SK-N-SH (cell line): ENCODE measurements at regions of chr19 and their contacts with region 1.

Region 1: DNA sequence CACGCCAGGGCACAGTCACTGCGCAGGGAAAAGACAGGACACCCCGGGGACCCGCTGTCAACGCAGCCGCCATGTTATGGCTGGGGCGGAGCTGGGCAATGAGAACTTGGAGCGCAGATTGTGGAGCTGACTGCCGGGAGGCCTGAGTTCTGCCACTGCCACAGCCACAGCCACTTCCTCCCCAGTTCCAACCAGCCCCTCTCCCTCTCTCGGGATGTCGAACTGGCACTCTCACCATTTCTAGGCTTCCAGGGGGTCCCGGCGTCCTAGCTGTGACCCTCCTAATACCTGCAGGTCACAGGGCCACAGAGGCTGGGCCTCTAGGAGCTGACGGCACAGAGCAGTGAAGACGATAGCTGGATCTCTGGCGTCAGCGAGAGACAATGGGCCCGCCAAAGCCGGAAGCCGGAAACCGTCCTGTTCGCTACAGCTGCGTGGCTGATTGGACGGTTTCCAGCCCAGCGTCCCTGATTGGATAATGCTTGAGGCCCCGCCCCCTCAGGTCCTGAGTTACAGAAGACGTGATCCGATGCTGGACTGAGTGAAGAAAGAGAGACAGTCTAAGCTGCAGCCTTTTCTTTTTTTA is at the start of gene ZNF506:
- DNase-seq: peak; percentile 90
- H3K4me3 ChIP-seq: peak within 1 kb of the TSS; percentile 58 to 82
- H3K27ac ChIP-seq: peak within 1 kb of the TSS; percentile 89 to 92
- H3K4me1 ChIP-seq: no peaks in the 10 kb centered on the region; a peak in 1 of 4 replicates
- H3K27me3 ChIP-seq: no peaks in the 10 kb centered on the region
- CTCF ChIP-seq: no peak
- EP300 ChIP-seq: no peak
- RAD21 ChIP-seq: no peak
- polyA plus RNA-seq, gene ZNF506: 4.1 and 7.3 TPM in 2 replicates

Region 2: DNA sequence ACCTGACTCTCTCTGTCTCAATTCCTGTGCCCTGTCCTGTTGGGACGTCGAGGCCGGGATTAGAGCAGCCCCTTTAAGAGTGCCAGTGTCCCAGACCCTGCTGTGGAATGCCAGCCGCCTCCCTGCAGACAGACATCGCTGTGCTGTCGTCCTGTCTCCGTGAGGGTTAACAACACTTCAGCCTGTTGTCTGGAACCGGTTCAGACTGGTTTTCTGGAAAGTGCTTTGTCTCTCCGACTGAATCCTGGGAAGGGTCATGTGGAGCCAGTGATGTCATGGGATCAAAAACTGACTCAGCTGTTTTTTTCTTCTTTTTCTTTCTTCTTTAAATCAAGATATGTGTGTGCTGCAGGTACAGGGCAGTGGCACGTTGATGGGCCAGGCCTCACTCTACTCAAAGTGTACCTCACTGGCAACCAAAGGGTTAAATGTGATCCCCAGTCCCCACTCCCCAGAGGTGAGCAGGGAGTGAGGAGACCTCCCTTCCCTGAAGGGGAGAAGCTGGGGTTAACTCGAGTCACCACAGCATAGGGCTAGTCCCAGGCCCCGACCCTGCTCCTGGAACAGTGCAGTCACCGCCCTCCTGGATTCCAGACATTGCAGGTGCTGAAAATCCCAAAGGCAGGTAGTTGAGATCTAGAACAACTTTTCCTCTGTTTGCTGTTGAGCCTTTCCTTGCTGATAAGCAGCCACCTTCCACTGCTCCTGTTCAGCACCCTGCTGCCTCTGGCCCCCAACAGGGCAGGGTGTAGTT is 356.9 kb before region 1 on chr19:
- CTCF ChIA-PET with region 1: no interaction called
- POLR2A ChIA-PET with region 1: no interaction called
- DNase-seq: no peak
- H3K4me3 ChIP-seq: no peak overlapping the region
- H3K27ac ChIP-seq: peak overlapping the region in 1 of 2 experiments; percentile 8; a peak in 2 of 4 replicates
- H3K4me1 ChIP-seq: peaks cover 43 to 51% of the 10 kb centered on the region in 2 experiments
- H3K27me3 ChIP-seq: no peaks in the 10 kb centered on the region
- CTCF ChIP-seq: no peak
- EP300 ChIP-seq: no peak
- RAD21 ChIP-seq: no peak

Region 3: DNA sequence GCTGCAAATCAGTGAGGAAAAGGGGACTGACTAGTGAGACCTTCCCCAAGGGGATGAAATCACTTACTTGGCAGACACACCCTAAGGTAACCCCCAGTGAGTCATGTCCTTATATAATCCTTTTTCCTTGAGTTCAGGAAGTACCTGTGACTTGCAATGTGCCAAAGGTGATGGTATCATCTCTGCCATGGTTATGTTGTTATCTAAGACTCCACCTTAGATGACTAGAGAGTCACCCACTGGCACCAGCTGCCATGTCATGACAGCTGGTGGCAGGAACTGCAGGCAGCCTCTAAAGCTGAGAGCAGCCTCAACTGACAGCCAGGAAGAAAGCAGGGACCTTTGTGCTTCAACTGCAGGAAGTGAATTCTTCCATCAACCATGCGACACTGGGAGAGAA is 215.4 kb before region 1 on chr19:
- CTCF ChIA-PET with region 1: no interaction called
- POLR2A ChIA-PET with region 1: no interaction called
- DNase-seq: no peak
- H3K4me3 ChIP-seq: no peak overlapping the region
- H3K27ac ChIP-seq: no peak overlapping the region
- H3K4me1 ChIP-seq: no peaks in the 10 kb centered on the region
- H3K27me3 ChIP-seq: no peaks in the 10 kb centered on the region
- CTCF ChIP-seq: no peak
- EP300 ChIP-seq: no peak
- RAD21 ChIP-seq: no peak

Region 4: DNA sequence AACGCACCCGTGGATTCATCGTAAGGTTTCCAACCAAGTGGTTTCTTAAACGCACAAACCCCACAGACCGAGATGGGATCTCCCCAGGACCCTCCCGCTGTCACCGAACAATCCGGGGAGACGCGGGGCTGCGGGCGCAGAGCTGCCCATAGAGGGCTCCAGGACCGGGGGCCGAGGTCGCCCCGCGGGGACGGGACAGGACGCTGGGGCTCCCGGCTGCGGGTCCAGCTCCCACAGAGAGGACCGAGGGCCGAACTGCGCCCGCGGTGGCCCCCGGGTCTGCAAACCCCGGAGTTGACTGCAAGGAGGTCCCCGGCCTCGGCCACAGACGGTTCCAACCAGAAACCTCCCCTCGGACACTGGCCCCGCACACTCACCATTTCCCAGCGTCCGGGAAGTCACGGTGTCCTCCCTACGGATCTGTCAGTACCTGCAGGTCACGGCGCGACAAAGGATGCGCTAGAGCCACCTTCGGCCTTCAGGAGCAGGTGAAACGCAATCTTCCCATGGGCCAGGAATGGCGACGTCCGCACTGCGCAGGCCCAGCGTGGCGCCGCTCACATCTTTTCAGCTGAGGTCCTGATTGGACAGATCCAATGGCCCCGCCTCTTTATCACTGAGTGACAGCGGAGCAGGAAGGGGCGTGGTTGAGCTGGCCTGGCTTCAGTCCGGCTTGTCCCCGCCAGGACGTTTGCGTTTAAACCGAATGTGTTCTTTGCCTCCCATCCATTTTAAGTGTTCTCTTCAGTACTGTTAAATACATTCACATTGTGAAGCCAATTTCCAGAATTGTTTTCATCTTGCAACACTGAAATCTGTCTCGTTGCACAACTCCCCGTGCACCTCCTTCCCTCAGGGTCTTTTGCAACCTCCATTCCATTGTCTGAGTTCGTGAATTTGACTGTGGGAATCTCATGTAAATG is 88.6 kb before region 1 on chr19 and contains the start of gene ZNF14:
- CTCF ChIA-PET with region 1: no interaction called
- POLR2A ChIA-PET with region 1: interaction called, 10 read pairs
- DNase-seq: peak; percentile 98
- H3K4me3 ChIP-seq: peak within 1 kb of the TSS; percentile 71 to 95
- H3K27ac ChIP-seq: peak within 1 kb of the TSS; percentile 39 to 72; a peak in 3 of 4 replicates
- H3K4me1 ChIP-seq: no peaks in the 10 kb centered on the region
- H3K27me3 ChIP-seq: no peaks in the 10 kb centered on the region
- CTCF ChIP-seq: peak; percentile 23; the same call in 1 of the 2 replicates
- EP300 ChIP-seq: no peak
- RAD21 ChIP-seq: no peak
- polyA plus RNA-seq, gene ZNF14: 1.1 and 1.7 TPM in 2 replicates

Region 5: GRCh38 chr19:19749898-19750617 is 71.4 kb before region 1 on chr19:
- CTCF ChIA-PET with region 1: no interaction called
- POLR2A ChIA-PET with region 1: no interaction called
- DNase-seq: no peak
- H3K4me3 ChIP-seq: no peak overlapping the region
- H3K27ac ChIP-seq: no peak overlapping the region
- H3K4me1 ChIP-seq: no peaks in the 10 kb centered on the region
- H3K27me3 ChIP-seq: no peaks in the 10 kb centered on the region
- CTCF ChIP-seq: no peak
- EP300 ChIP-seq: no peak
- RAD21 ChIP-seq: no peak

Region 6: GRCh38 chr19:19776041-19777008 is 45.1 kb before region 1 on chr19:
- CTCF ChIA-PET with region 1: no interaction called
- POLR2A ChIA-PET with region 1: interaction called, 17 read pairs
- DNase-seq: peak; percentile 90
- H3K4me3 ChIP-seq: peak overlapping the region; percentile 79 to 83
- H3K27ac ChIP-seq: peak overlapping the region; percentile 38 to 82
- H3K4me1 ChIP-seq: peaks cover 0 to 12% of the 10 kb centered on the region in 2 experiments; a peak in 2 of 4 replicates
- H3K27me3 ChIP-seq: no peaks in the 10 kb centered on the region
- CTCF ChIP-seq: no peak
- EP300 ChIP-seq: no peak
- RAD21 ChIP-seq: 0 out of 2 replicates have a peak, but pooled peaks have one; percentile 10

Region 7: DNA sequence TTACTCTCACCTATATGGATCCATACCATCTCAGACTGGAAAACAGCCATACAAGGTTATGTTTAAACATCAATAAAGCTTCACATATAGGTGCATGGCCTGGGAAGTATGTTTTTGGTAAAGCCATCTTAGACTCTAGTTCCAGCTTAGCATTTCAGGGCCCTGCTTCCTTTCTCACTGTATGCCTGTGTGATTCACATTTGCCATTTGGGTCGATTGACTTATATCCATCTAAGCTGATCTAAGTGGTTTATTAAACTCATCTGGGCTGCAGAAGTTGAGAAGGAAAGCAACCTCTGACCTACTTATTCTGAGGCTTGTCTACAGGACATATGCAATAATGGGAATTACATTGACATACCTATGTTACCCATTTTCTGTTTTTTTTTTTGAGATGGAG is 33.4 kb before region 1 on chr19:
- CTCF ChIA-PET with region 1: no interaction called
- POLR2A ChIA-PET with region 1: no interaction called
- DNase-seq: no peak
- H3K4me3 ChIP-seq: no peak overlapping the region
- H3K27ac ChIP-seq: no peak overlapping the region
- H3K4me1 ChIP-seq: no peaks in the 10 kb centered on the region
- H3K27me3 ChIP-seq: no peaks in the 10 kb centered on the region
- CTCF ChIP-seq: no peak
- EP300 ChIP-seq: no peak
- RAD21 ChIP-seq: no peak

Region 8: DNA sequence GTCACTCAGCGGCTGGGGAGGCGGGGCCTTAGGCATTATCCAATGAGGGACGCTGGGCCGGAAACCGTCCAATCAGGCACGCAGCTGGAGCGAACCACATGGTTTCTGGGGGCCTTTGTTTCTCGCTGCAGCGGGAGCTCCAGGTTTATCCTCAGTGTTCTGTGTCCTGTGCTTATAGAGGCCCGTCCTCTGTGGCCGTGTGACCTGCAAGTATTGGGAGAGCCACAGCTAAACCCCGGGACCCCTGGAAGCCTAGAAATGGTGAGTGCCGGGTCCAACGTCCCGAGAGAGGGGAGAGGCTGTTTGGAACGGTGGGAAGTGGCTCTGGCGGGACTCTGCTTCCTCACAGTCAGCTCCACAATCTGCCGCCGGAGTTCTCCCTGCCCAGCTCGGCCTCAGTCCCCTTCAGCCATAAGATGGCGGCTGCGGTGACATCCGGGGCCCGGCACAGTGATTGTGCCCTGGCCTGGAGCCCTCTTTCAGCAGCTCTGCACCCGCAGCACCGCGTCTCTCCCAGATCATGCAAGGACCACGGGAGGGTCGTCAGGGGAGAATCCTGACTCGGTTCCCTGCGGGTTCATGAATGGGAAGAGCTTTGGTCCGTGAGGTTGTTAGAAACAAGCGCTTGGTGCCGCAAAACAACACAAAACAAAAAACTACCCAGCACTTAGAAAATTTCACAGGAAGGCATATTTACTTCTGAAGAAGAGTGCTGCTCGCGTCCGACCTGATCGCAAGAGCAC is 44.5 kb after region 1 on chr19 and contains the start of gene ZNF253:
- CTCF ChIA-PET with region 1: no interaction called
- POLR2A ChIA-PET with region 1: interaction called, 40 read pairs
- DNase-seq: peak; percentile 92
- H3K4me3 ChIP-seq: peak within 1 kb of the TSS; percentile 78 to 97
- H3K27ac ChIP-seq: peak within 1 kb of the TSS; percentile 80 to 97
- H3K4me1 ChIP-seq: no peaks in the 10 kb centered on the region
- H3K27me3 ChIP-seq: no peaks in the 10 kb centered on the region
- CTCF ChIP-seq: no peak
- EP300 ChIP-seq: no peak
- RAD21 ChIP-seq: no peak
- polyA plus RNA-seq, gene ZNF253: 0.79 and 0.81 TPM in 2 replicates

Region 9: DNA sequence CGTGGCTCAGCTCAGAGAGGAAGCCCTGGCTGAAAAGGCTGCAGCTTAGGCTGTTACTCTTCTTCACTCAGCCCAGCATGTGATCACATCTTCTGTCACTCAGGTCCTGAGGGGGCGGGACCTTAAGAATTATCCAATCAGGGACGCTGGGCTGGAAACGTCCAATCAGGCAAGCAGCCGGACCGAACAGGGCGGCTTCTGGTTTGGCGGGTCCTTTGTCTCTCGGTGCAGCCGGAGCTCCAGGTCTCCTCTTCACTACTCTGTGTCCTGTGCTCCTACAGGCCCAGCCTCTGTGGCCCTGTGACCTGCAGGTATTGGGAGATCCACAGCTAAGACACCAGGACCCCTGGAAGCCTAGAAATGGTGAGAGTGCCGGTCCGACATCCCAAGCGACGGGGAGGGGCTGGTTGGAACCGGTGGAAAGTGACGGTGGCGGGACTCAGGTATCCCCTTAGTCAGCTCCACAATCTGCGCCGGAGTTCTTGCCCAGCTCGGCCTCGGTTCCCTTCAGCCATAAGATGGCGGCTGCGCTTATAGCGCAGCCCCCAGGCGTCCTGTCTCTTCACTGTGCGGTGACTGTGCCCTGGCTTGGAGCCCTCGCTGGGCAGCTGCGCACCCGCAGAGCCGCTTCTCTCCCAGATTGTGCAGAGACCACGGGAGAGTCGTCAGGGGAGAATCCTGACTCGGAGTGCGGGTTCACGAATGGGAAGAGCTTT is 79.4 kb after region 1 on chr19 and contains the start of gene ZNF93:
- CTCF ChIA-PET with region 1: no interaction called
- POLR2A ChIA-PET with region 1: interaction called, 22 read pairs
- DNase-seq: peak; percentile 84
- H3K4me3 ChIP-seq: peak within 1 kb of the TSS; percentile 61 to 90
- H3K27ac ChIP-seq: peak within 1 kb of the TSS; percentile 80 to 86
- H3K4me1 ChIP-seq: no peaks in the 10 kb centered on the region; a peak in 1 of 4 replicates
- H3K27me3 ChIP-seq: no peaks in the 10 kb centered on the region
- CTCF ChIP-seq: no peak
- EP300 ChIP-seq: no peak
- RAD21 ChIP-seq: no peak
- polyA plus RNA-seq, gene ZNF93: 4.3 and 6.7 TPM in 2 replicates